Activated CD4-positive, alpha-beta T cell treated with anti-CD3 and anti-CD28 coated beads, Interleukin-2, amount 10 ng/mL, durations not matched to agents 24 days and 14 days (primary cell): ENCODE measurements at regions of chr4 and their contacts with region 1.

Region 1: GRCh38 chr4:6673660-6674499 is 19.8 kb upstream of the S100P start:
- DNase-seq: peak; percentile 98
- H3K4me3 Mint-ChIP-seq: peak overlapping the region; percentile 95
- H3K27ac Mint-ChIP-seq: peak overlapping the region; percentile 100
- H3K4me1 Mint-ChIP-seq: peaks cover 46% of the 10 kb centered on the region
- H3K27me3 Mint-ChIP-seq: no peaks in the 10 kb centered on the region

Region 2: GRCh38 chr4:6633041-6633906 is 40.6 kb before region 1 on chr4:
- intact Hi-C with region 1: no loop called
- DNase-seq: no peak
- H3K4me3 Mint-ChIP-seq: no peak overlapping the region
- H3K27ac Mint-ChIP-seq: no peak overlapping the region
- H3K4me1 Mint-ChIP-seq: peaks cover 2% of the 10 kb centered on the region
- H3K27me3 Mint-ChIP-seq: peaks cover 3% of the 10 kb centered on the region

Region 3: GRCh38 chr4:6695660-6696630 is 22.1 kb after region 1 on chr4:
- intact Hi-C with region 1: loop called (anchors 2 kb)
- DNase-seq: peak; percentile 89
- H3K4me3 Mint-ChIP-seq: peak overlapping the region; percentile 72
- H3K27ac Mint-ChIP-seq: peak overlapping the region; percentile 97
- H3K4me1 Mint-ChIP-seq: peaks cover 70% of the 10 kb centered on the region
- H3K27me3 Mint-ChIP-seq: no peaks in the 10 kb centered on the region

Region 4: DNA sequence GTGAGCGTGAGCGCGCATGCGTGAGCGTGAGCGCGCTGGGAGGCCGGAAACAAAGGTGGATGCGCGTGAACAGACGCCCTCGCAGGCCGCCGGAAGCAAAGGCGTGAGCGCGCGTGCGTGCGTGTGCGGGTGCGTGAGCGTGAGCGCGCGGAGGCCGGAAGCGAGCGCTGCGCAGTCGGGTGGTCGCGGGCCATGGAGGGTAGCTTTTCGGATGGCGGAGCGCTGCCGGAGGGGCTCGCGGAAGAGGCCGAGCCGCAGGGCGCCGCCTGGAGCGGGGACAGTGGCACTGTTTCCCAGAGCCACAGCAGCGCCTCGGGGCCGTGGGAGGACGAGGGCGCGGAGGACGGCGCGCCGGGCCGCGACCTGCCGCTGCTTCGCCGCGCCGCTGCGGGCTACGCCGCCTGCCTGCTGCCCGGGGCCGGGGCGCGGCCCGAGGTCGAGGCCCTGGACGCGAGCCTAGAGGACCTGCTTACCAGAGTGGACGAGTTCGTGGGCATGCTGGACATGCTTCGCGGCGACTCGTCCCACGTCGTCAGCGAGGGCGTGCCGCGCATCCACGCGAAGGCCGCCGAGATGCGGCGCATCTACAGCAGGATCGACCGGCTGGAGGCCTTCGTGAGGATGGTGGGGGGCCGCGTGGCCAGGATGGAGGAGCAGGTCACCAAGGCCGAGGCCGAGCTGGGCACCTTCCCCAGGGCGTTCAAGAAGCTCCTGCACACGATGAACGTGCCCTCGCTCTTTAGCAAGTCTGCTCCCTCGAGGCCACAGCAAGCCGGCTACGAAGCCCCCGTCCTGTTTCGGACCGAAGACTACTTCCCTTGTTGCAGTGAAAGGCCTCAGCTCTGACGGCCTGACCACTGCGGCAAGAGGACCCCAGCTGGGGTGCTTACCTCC is 42.4 kb after region 1 on chr4 and contains the start of gene BLOC1S4:
- intact Hi-C with region 1: loop called (anchors 1 kb)
- DNase-seq: peak; percentile 97
- H3K4me3 Mint-ChIP-seq: peak within 1 kb of the TSS; percentile 98
- H3K27ac Mint-ChIP-seq: peak within 1 kb of the TSS; percentile 99
- H3K4me1 Mint-ChIP-seq: peaks cover 23% of the 10 kb centered on the region
- H3K27me3 Mint-ChIP-seq: peaks cover 3% of the 10 kb centered on the region
- total RNA-seq, gene BLOC1S4: 20.1 and 21.4 TPM in 2 replicates

Region 5: DNA sequence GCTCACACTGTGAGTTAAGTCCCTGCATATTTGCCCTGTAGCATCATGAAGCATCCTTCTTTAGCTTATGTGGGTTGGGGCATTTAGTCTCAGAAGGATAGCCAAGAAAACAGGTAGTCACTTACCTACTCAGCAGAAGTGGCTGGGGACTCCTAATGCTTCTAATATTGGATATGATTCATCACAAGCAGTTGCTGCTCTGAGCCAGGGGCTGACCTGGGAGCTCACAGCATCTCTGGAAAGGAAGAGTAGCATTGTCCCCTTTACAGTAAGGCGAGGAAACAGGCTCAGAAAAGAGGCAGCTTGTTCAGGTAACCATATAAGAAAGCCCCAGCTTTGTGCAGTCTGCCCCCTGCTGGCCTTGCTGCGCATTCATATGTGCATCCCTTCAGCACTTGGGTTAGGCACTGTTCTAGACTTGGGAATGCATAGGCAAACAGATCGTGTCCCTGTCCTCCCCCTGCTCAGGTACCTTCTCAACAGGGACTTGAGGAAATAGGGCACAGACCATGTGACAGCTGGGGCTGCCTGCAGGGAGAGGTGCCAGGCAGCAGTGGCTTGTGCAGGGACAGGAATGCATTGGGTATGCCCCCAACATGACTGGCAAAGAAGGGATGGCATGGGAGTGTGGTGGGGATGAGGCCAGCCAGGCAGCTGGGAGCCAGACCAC is 200.0 kb after region 1 on chr4:
- intact Hi-C with region 1: loop called (anchors 2 kb)
- DNase-seq: peak; percentile 93
- H3K4me3 Mint-ChIP-seq: no peak overlapping the region
- H3K27ac Mint-ChIP-seq: no peak overlapping the region
- H3K4me1 Mint-ChIP-seq: peaks cover 4% of the 10 kb centered on the region
- H3K27me3 Mint-ChIP-seq: no peaks in the 10 kb centered on the region